CD4-positive, alpha-beta T cell (primary cell): ENCODE measurements at regions of chr18 and their contacts with region 1.

Region 1: GRCh38 chr18:35343936-35344735 is at the start of gene ZNF24:
- DNase-seq: peak; percentile 83 to 95 (median 88)
- ATAC-seq: peak; percentile 92
- H3K4me3 ChIP-seq: peak within 1 kb of the TSS; percentile 96
- H3K4me3 Mint-ChIP-seq: peak within 1 kb of the TSS; percentile 97
- H3K27ac ChIP-seq: peak within 1 kb of the TSS; percentile 99
- H3K27ac Mint-ChIP-seq: peak within 1 kb of the TSS; percentile 97
- H3K4me1 ChIP-seq: peaks cover 27% of the 10 kb centered on the region
- H3K4me1 Mint-ChIP-seq: peaks cover 55% of the 10 kb centered on the region
- H3K27me3 ChIP-seq: no peaks in the 10 kb centered on the region
- H3K27me3 Mint-ChIP-seq: no peaks in the 10 kb centered on the region
- CTCF ChIP-seq: no peak
- total RNA-seq, gene ZNF24: 65.9 to 68.3 TPM

Region 2: DNA sequence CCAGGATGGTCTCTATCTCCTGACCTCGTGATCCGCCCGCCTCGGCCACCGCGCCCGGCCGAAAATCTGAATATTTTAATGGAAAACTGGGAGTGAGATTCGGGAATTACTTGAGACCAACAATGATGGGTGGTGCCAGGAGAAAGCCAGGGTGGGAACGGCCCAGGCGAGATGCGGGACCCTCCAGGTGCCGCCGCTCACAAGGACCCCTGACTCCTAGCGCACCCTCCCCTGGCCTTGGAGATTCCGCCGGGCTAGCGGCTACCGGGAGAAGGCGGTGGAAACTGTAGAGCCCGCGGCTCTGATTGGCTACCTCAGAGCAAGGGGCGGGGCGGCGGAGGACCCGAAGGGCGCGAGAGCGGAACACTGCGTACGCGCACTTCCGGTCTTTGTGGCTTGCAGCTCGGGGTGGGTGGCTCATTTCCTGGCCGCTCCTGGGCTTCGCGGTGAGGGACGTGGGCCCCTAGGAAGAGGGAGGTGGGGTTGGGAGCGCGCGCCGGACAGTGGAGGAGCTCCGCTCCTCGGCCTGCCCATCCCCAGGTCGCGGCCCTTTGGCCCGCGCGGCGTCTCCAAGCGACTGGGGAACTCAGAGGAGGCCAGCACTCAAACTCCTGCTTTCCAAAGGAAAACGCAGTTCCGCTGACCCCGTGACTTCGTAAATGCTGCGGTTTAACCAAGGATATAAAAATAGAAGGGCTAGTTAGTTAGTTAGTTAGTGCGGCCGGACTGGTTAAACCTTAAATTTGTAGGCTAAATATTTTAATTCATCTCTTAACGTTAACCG is 103.3 kb before region 1 on chr18 and contains the start of gene ZNF397:
- CTCF ChIA-PET with region 1: interaction called, 3 read pairs
- POLR2A ChIA-PET with region 1: interaction called, 30 read pairs
- intact Hi-C with region 1: loop called in 1 of 2 experiments (anchors 2 kb)
- DNase-seq: peak; percentile 87 to 97 (median 94)
- ATAC-seq: peak; percentile 96
- H3K4me3 ChIP-seq: peak within 1 kb of the TSS; percentile 83
- H3K4me3 Mint-ChIP-seq: peak within 1 kb of the TSS; percentile 98
- H3K27ac ChIP-seq: peak within 1 kb of the TSS; percentile 90 to 94
- H3K27ac Mint-ChIP-seq: peak within 1 kb of the TSS; percentile 99
- H3K4me1 ChIP-seq: peaks cover 9% of the 10 kb centered on the region
- H3K4me1 Mint-ChIP-seq: peaks cover 37% of the 10 kb centered on the region
- H3K27me3 ChIP-seq: no peaks in the 10 kb centered on the region
- H3K27me3 Mint-ChIP-seq: no peaks in the 10 kb centered on the region
- CTCF ChIP-seq: no peak
- total RNA-seq, gene ZNF397: 7.6 to 10.0 TPM

Region 3: DNA sequence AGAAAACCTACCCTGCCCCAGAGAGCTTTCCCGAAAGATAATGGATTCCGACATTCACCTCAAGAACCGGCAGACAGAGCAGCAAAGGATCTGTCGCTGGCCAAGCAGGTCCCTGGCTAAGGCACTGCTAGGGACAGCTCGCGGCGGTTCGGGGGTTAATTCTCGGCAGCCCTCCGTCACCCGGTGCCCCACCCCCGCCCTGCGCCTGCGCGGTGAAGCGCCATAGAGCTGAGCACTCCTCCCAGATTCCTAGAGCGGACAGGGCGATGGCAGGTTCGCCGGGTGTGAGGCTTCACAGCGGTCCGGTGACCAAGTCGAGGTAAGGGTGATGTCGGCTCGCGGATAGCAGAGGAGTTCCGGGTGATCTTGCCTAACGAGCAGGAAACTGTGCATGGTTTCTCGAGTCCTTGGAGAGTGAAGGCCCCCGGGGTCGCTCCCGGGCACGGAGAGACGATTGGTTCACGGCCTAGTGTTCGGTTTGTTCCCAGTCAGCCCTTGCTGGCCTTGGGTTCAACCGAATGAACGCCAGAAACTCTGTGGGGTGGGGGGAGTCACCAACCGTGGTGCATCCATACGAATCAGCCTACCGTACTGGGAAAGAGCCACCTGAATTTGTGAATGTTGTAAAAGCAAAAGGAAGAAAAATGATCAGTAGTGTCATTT is 53.9 kb before region 1 on chr18 and contains the start of gene ZSCAN30:
- CTCF ChIA-PET with region 1: no interaction called
- POLR2A ChIA-PET with region 1: interaction called, 26 read pairs
- intact Hi-C with region 1: loop called (anchors 1 to 2 kb)
- DNase-seq: peak; percentile 93 to 98 (median 96)
- ATAC-seq: peak; percentile 90
- H3K4me3 ChIP-seq: peak within 1 kb of the TSS; percentile 92
- H3K4me3 Mint-ChIP-seq: peak within 1 kb of the TSS; percentile 99
- H3K27ac ChIP-seq: peak within 1 kb of the TSS; percentile 55 to 87
- H3K27ac Mint-ChIP-seq: peak within 1 kb of the TSS; percentile 96
- H3K4me1 ChIP-seq: peaks cover 31% of the 10 kb centered on the region
- H3K4me1 Mint-ChIP-seq: peaks cover 78% of the 10 kb centered on the region
- H3K27me3 ChIP-seq: no peaks in the 10 kb centered on the region
- H3K27me3 Mint-ChIP-seq: no peaks in the 10 kb centered on the region
- CTCF ChIP-seq: no peak
- total RNA-seq, gene ZSCAN30: 9.6 to 11.6 TPM

Region 4: DNA sequence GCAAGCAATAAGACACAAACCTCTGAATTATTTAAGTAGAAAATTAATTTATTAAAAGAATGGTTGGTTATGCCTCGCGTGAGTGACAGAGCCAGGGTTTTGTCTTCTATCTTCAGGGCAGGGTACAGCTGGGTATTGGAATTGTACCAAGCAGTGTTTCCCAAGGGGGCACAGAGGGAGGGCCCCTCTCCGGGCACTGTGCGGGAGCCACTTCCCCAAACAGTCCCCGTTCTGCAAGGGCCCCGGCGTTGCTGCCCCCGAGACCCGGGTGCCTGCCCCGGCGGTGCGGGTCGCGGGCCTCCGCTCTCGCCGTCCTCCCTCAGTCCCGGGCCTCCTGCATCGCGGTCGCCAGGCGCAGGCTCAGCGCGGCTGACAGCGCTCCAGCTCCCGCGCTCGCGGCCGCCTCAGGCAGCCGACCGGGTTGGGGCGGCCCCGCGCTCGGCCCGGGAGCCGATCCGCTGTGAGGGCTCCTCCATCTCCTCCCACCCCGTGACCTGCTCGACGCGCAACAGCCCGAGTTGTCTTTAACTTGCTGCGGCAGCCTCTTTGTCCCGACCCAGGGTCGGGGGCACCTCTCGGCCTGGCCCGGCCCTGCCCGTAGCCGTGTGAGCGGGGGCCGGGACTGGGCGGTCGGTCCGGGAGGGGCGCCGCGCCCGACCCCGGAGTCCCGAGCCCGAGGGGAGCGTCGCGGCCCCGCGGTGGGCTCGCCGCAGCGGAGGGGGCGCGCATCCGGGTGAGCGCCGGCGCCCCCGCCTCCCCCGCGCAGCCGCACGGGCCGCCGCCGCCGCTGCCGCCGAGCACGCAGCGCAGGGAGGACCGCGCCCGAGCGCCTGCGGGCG is 236.8 kb after region 1 on chr18:
- CTCF ChIA-PET with region 1: no interaction called
- POLR2A ChIA-PET with region 1: no interaction called
- intact Hi-C with region 1: loop called in 1 of 2 experiments (anchors 10 kb)
- DNase-seq: peak; percentile 21 to 84 (median 44)
- ATAC-seq: peak; percentile 75
- H3K4me3 ChIP-seq: peak overlapping the region; percentile 55
- H3K4me3 Mint-ChIP-seq: peak overlapping the region; percentile 63
- H3K27ac ChIP-seq: peak overlapping the region; percentile 26 to 42
- H3K27ac Mint-ChIP-seq: no peak overlapping the region
- H3K4me1 ChIP-seq: peaks cover 18% of the 10 kb centered on the region
- H3K4me1 Mint-ChIP-seq: peaks cover 35% of the 10 kb centered on the region
- H3K27me3 ChIP-seq: no peaks in the 10 kb centered on the region
- H3K27me3 Mint-ChIP-seq: peaks cover 13% of the 10 kb centered on the region
- CTCF ChIP-seq: no peak

Region 5: DNA sequence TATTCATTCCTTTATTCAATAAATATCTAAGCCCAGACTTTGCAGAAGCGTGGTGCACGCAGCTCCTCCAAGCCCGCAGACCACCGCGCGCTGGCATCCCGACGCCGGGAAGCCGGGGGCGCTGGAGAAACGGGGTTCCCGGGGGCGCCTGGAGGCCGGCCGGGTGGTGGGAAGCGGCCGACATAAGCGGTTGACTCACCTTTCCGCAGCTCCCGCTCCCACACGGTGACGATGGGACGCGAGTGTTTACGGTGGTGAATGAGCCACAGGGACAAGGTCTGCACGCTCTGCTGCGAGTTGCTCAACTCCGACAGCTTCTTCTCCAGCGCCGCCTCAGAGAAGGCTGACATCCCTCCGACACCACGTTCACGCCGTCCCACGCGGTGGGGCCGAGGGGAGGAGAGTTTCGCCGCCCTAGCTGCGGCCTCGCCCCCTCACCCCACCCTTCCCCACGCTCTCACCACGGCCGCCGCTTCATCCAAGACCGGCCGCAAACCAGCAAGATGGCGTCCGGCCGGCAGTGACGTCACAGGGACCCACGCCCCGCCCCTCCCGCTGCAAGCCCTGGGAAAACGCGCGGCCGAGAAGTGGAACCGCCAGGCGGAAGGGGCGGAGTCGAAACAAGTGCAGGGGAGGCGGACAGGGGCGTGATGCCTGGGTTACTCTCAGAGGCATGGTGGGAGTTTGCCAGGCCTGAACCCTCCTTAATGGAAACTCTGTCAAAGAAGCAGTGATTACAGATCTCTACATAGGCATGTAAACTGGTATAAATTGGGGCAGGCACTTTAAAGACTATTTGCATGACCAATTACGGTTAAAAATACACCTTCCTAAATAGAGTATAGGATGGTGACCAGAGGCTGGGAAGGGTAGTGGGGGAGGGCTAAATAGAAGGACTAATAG is 723.2 kb after region 1 on chr18 and contains the start of gene RPRD1A:
- CTCF ChIA-PET with region 1: no interaction called
- POLR2A ChIA-PET with region 1: no interaction called
- intact Hi-C with region 1: loop called in 1 of 2 experiments (anchors 10 kb)
- DNase-seq: peak; percentile 92 to 98 (median 96)
- ATAC-seq: peak; percentile 94
- H3K4me3 ChIP-seq: peak within 1 kb of the TSS; percentile 96
- H3K4me3 Mint-ChIP-seq: peak within 1 kb of the TSS; percentile 91
- H3K27ac ChIP-seq: peak within 1 kb of the TSS; percentile 65 to 86
- H3K27ac Mint-ChIP-seq: peak within 1 kb of the TSS; percentile 91
- H3K4me1 ChIP-seq: peaks cover 17% of the 10 kb centered on the region
- H3K4me1 Mint-ChIP-seq: peaks cover 46% of the 10 kb centered on the region
- H3K27me3 ChIP-seq: no peaks in the 10 kb centered on the region
- H3K27me3 Mint-ChIP-seq: no peaks in the 10 kb centered on the region
- CTCF ChIP-seq: no peak
- total RNA-seq, gene RPRD1A: 21.8 to 25.1 TPM

Region 6: GRCh38 chr18:36828630-36829361 is 1484.7 kb after region 1 on chr18 and contains the starts of genes KIAA1328 and TPGS2:
- CTCF ChIA-PET with region 1: no interaction called
- POLR2A ChIA-PET with region 1: no interaction called
- intact Hi-C with region 1: loop called in 1 of 2 experiments (anchors 10 kb)
- DNase-seq: peak; percentile 68 to 96 (median 83)
- ATAC-seq: peak; percentile 90
- H3K4me3 ChIP-seq: peak within 1 kb of the TSS; percentile 86
- H3K4me3 Mint-ChIP-seq: peak within 1 kb of the TSS; percentile 87
- H3K27ac ChIP-seq: peak within 1 kb of the TSS; percentile 58 to 78
- H3K27ac Mint-ChIP-seq: peak within 1 kb of the TSS; percentile 73
- H3K4me1 ChIP-seq: peaks cover 24% of the 10 kb centered on the region
- H3K4me1 Mint-ChIP-seq: peaks cover 60% of the 10 kb centered on the region
- H3K27me3 ChIP-seq: no peaks in the 10 kb centered on the region
- H3K27me3 Mint-ChIP-seq: no peaks in the 10 kb centered on the region
- CTCF ChIP-seq: peak; percentile 63
- total RNA-seq, gene KIAA1328: 8.7 to 9.4 TPM
- total RNA-seq, gene TPGS2: 16.4 to 19.0 TPM